Activated CD8-positive, alpha-beta T cell treated with anti-CD3 and anti-CD28 coated beads, Interleukin-2, amount 10 ng/mL, durations not matched to agents 7 days and 5 days (primary cell): ENCODE measurements at regions of chr15 and their contacts with region 1.

Region 1: DNA sequence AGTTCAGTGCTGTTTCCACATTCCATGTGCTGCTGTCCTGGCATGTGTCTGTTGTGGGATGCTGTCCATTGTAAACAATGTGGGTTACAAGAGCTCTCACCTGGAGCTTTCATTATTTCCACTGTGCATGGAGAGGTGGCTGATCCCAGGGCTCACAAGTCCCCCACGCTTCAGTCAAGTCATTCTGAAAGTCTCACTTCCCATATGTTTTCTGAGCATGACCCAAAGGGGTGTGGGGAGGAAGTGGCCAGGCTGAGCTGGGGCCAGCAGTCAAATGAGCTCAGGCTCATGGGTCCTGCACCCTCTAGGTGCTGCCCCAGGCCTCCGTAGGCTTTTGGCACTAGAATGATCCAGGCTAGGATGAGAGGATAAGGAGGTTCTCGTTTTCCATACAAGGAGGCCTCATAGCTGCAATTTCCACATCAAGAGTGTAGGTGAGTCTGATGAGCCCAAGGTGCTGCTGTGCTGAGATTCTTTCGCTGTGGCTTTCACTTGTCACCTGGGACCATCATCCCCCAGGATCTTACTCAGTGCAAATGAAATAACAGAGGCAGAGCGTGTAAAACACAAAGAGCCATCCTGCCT is 22.0 kb downstream of the STARD5 start:
- DNase-seq: peak; percentile 66
- ATAC-seq: peak; percentile 42
- H3K4me3 Mint-ChIP-seq: peak overlapping the region; percentile 99
- H3K27ac Mint-ChIP-seq: peak overlapping the region; percentile 93
- H3K4me1 Mint-ChIP-seq: peaks cover 51% of the 10 kb centered on the region
- H3K27me3 Mint-ChIP-seq: no peaks in the 10 kb centered on the region

Region 2: GRCh38 chr15:80934761-80935221 is 367.1 kb before region 1 on chr15:
- CTCF ChIA-PET with region 1: no interaction called
- POLR2A ChIA-PET with region 1: no interaction called
- DNase-seq: no peak
- ATAC-seq: no peak
- H3K4me3 Mint-ChIP-seq: no peak overlapping the region
- H3K27ac Mint-ChIP-seq: peak overlapping the region; percentile 3
- H3K4me1 Mint-ChIP-seq: peaks cover 8% of the 10 kb centered on the region
- H3K27me3 Mint-ChIP-seq: no peaks in the 10 kb centered on the region

Region 3: DNA sequence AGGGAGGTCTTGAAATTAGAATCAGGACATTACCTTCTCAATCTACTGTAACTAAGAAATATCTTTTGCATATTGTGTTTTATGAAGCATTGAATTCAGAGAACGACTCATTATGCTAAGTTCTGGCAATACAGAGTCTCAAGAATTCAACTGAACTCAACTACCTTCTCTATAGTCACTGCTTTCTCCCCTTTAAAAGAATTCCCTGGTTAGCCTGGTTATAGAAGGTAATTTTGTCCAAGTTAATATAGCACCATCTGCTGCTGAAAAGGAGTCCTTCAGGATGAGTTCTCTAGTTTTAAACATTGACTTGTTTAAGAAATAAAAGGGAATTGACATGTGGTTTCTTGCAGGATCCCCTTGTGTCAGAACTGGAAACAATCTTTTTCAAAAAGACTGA is 45.0 kb before region 1 on chr15:
- CTCF ChIA-PET with region 1: no interaction called
- POLR2A ChIA-PET with region 1: no interaction called
- DNase-seq: no peak
- ATAC-seq: no peak
- H3K4me3 Mint-ChIP-seq: no peak overlapping the region
- H3K27ac Mint-ChIP-seq: no peak overlapping the region
- H3K4me1 Mint-ChIP-seq: no peaks in the 10 kb centered on the region
- H3K27me3 Mint-ChIP-seq: peaks cover 2% of the 10 kb centered on the region

Region 4: DNA sequence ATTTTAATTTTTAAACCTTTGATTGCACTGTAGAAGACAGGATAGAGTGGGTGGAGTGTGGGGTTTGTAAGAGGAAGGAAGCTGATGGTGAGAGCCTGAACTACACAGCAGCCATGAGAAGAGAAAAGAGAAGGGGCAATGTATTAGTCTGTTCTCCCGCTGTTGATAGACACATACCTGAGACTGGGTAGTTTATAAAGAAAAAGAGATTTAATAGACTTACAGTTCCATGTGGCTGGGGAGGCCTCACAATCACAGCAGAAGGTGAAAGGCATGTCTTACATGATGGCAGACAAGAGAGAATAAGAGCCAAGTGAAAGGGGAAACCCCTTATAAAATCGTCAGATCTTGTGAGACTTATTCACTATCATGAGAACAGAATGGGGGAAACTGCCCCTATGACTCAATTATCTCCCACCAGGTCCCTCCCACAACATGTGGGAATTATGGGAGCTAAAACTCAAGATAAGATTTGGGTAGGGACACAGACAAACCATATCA is 15.2 kb before region 1 on chr15:
- CTCF ChIA-PET with region 1: interaction called, 31 read pairs
- POLR2A ChIA-PET with region 1: interaction called, 117 read pairs
- DNase-seq: no peak
- ATAC-seq: peak; percentile 77
- H3K4me3 Mint-ChIP-seq: peak overlapping the region; percentile 63
- H3K27ac Mint-ChIP-seq: peak overlapping the region; percentile 89
- H3K4me1 Mint-ChIP-seq: peaks cover 65% of the 10 kb centered on the region
- H3K27me3 Mint-ChIP-seq: no peaks in the 10 kb centered on the region

Region 5: GRCh38 chr15:81311752-81312464 is 10.0 kb after region 1 on chr15:
- CTCF ChIA-PET with region 1: interaction called, 7 read pairs
- POLR2A ChIA-PET with region 1: interaction called, 117 read pairs
- DNase-seq: no peak
- ATAC-seq: no peak
- H3K4me3 Mint-ChIP-seq: no peak overlapping the region
- H3K27ac Mint-ChIP-seq: peak overlapping the region; percentile 54
- H3K4me1 Mint-ChIP-seq: peaks cover 65% of the 10 kb centered on the region
- H3K27me3 Mint-ChIP-seq: no peaks in the 10 kb centered on the region

Region 6: DNA sequence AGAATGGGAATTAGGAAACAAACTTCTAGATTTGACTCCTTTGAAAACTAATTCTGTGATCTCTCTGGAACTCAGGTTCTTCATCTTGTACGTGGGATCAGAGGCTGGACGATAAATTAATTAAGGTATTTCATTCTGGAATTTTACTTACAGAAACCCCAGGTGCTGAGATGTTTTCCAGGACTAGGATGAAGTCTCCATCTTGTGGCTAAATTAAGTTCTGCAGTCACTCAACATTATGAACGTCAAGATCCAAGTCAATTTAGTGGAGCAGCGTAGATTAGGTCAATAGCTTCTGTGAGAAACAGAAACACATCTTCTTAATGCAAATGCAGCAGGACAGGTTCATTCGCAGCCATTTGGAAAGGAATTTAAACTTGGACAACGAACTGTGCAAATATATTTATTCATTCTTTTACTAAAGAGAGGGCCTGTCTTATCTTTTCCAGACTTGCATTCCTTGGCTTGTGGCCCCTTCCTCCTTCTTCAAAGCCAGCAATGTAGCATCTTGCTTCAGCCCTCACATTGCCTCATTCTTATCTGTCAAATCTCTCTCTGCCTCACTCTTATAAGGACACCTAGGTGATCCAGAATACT is 98.8 kb after region 1 on chr15:
- CTCF ChIA-PET with region 1: interaction called, 14 read pairs
- POLR2A ChIA-PET with region 1: interaction called, 3 read pairs
- DNase-seq: peak; percentile 31
- ATAC-seq: peak; percentile 39
- H3K4me3 Mint-ChIP-seq: no peak overlapping the region
- H3K27ac Mint-ChIP-seq: no peak overlapping the region
- H3K4me1 Mint-ChIP-seq: no peaks in the 10 kb centered on the region
- H3K27me3 Mint-ChIP-seq: no peaks in the 10 kb centered on the region